GM13976 (cell line): ENCODE measurements at regions of chr2 and their contacts with region 1.

Region 1: GRCh38 chr2:65630643-65631042 is 198.2 kb upstream of the SPRED2 start:
- DNase-seq: no peak
- CTCF ChIP-seq: no peak

Region 2: GRCh38 chr2:66434679-66435548 is 804.3 kb after region 1 on chr2 and contains the start of gene MEIS1:
- in situ Hi-C with region 1: loop called (anchors 25 kb)
- DNase-seq: peak; percentile 63
- CTCF ChIP-seq: no peak